ENCODE measurements at regions of chr13 and their contacts with region 1.

Region 1: DNA sequence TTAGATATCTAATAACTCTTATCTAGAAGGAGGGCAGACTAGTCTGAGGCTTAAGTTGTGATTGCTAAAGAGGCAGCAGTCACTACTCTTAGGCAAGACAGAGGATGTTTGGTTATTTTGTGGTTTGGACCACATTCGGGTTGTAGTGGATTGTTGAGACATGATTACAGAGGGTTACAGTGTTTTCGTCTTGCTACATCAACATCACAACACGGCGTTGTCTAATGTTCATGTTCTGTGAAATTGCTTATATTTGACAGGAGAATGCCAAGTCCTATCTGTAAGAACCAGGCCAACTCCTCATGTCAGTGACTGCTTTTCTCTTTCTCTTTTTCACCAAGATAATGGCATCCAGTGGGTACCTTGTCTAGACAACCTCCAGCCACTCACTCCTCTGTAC is 16.8 kb upstream of the TM9SF2 start:
- DNase-seq: no peak
- H3K4me3 ChIP-seq: no peak overlapping the region
- H3K27ac ChIP-seq: no peak overlapping the region
- H3K4me1 ChIP-seq: no peaks in the 10 kb centered on the region
- H3K27me3 ChIP-seq: no peaks in the 10 kb centered on the region
- CTCF ChIP-seq: no peak

Region 2: DNA sequence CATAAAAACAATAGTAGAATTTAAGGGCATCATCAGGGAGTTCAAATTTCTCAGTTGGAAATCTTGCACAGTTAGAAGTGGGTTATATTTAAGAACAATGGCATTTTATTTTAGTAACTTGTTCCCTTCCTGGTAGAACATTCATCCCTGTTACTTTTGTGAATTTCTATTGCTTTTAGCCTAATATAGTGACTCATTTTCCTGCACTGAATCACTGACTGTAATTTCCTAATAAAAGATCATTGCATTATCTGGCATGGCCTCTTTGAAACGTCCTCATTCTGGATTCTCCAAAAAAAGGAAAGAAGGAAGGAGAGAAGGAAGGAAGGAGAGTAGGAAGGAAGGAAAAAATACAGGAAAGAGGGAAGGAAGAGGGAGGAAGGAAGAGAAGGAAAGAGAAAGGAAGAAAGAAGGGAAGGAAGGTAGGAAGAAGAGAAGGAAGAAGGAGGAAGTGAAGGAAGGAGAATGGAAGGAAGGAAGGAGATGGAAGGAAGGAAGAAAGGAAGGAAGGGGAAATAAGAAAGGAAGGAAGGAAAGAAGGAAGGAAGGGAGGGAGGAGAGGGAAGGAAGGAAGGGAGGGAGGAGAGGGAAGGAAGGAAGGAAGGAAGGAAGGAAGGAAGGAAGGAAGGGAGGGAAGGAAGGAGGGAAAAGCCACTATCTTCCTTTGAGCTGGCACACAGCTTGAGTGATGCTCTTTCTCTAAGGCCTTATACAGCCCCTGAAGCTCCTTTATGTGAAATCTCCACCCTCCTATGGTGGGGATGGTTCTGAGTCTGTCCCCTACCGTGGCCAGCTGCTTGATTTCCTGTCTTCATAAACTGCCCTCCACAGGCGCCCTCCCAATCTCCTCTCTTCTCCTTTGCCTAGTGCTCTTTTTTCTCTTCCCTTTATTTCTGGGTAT is 13.0 kb before region 1 on chr13:
- CTCF ChIA-PET with region 1: interaction called, 3 read pairs
- POLR2A ChIA-PET with region 1: interaction called, 10 read pairs
- intact Hi-C with region 1: no loop called
- DNase-seq: peak; percentile 76
- H3K4me3 ChIP-seq: no peak overlapping the region
- H3K27ac ChIP-seq: no peak overlapping the region
- H3K4me1 ChIP-seq: no peaks in the 10 kb centered on the region
- H3K27me3 ChIP-seq: no peaks in the 10 kb centered on the region
- CTCF ChIP-seq: no peak

Measured in A673 (cell line).